Astrocyte of the cerebellum (primary cell): ENCODE measurements at regions of chr21 and their contacts with region 1.

Region 1: GRCh38 chr21:46110499-46111192 is 12.7 kb downstream of the COL6A2 start:
- DNase-seq: no peak
- H3K4me3 ChIP-seq: no peak overlapping the region
- CTCF ChIP-seq: peak; percentile 4

Region 2: GRCh38 chr21:45854690-45855247 is 255.9 kb before region 1 on chr21:
- in situ Hi-C with region 1: no loop called
- DNase-seq: no peak
- H3K4me3 ChIP-seq: no peak overlapping the region
- CTCF ChIP-seq: no peak

Region 3: DNA sequence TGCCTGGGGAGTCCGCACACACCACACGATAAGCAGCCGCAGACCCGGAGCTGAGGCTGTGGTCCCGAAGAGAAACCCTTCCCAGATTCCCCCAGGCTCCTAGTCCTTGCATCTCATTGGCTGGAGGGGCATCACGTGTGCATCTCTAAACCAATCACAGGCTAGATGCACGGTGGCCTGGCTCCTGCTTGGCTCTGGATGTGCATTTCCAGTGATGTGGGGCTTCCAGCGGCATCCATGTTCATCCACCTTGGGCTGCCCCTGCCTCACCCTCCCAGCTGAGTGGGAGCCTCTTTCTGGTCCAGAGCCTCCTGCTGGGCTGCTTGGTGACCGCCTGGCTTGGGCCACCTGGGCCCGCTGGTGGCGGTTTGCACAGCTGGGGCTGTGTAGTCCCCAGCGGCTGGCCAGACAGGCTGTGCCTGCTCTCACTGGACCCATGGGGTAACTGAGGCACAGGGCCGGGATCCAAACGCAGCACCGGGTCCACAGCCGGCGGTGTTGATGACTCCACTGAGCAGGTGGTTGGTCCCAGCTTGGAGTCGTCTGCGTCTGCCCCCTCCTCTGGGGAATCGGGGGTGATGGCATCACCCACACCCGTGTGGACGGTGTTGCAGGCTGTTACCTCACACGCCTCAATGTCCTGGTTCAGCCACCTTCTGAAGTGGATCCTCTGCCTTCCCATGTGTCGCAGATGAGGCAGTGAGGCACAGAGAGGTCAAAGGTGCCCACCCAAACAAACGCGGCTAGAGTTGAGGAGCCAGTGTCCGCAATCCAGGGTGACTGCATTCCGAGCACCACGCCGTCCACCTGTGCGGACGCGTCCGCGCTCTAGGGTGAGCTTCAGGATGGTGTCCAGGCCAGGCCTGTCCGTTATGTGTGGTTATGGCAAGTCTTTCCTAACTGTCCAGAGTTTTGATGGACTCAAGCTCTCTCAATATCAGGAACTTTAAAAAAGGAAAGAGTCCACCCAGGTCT is 87.8 kb before region 1 on chr21:
- in situ Hi-C with region 1: no loop called
- DNase-seq: no peak
- H3K4me3 ChIP-seq: no peak overlapping the region
- CTCF ChIP-seq: no peak

Region 4: DNA sequence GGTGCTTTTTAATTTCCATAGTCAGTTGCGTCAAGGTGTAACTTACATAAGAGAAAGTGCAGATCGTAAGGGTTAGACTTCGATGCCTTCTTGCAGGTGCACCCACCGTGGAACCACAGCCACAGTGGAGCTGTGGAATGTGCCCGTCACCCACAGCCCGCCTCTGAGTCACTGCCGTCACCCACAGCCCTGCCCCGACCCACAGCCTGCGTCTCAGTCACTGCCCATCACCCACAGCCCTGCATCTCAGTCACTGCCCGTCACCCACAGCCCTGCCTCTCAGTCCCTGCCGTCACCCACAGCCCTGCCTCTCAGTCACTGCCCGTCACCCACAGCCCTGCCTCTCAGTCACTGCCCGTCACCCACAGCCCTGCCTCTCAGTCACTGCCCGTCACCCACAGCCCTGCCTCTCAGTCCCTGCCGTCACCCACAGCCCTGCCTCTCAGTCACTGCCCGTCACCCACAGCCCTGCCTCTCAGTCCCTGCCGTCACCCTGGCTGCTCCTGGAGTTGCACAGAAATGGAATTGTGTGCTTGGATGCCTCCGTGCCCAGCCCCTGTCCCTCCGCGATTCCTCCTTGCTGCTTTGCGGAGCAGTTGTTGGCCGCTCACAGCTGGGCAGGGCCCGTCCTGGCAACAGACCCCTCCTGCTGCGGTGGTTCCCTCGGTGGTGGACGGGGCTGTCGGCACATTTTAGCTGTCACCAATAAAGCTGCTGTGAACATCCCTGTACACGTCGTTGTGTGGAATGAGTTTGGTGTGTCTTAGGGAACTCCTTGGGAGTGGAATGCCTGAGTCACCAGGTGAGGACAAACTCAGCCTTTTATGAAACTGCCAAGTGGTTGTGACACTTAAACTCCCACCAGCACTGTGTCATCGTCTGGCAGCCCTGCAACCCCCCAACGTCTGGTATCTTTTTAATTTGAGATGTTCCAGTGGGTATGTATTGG is 57.7 kb before region 1 on chr21:
- in situ Hi-C with region 1: loop called (anchors 5 kb)
- DNase-seq: peak; percentile 67
- H3K4me3 ChIP-seq: no peak overlapping the region
- CTCF ChIP-seq: no peak

Region 5: GRCh38 chr21:46368533-46369285 is 258.1 kb after region 1 on chr21:
- in situ Hi-C with region 1: no loop called
- DNase-seq: no peak
- H3K4me3 ChIP-seq: no peak overlapping the region
- CTCF ChIP-seq: no peak